Psoas muscle (tissue), 8 donors: ENCODE measurements at regions of chr3 and their contacts with region 1.

Region 1: DNA sequence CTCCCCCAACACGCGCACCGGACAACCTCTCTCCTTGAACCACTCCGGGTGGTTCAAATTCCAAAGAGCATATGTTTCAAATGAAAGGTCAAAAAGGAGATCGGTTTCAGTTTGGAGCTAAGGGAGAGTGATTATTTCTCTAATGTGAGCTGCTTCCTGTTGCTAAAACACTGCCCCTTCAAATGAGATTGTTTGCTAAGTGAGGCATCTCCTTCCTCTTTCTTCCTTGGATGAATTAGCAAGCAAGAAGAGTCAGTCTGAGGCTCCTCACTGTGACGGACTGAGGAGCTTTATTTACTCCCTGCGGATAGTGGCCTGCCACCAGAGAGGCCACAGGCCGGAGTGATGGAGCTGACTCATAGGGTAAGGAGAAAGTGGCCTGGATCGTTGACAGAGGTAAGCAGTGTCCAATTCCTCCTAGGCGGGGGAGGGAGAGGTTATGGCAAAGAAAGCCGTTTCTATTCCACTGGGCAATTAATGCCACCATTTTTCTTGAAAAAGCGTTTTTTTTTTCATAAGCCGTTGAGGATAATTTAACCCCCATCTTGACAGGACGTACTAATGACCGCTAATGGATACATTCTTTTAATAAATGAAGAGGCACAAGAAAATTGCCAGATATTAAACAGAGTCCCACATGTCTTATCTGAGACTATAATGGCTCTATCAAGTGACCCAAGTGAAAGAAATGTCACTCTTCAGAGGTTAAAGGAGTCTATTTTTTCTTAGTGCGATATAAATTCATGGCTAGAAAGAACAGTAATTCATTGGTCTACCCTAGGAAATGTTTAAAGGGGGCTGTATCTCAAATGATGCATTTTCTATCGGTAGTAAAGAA is 167.0 kb upstream of the ANKRD28 start:
- DNase-seq: peak; percentile 68 to 83
- ATAC-seq: peak; percentile 98 to 100 (median 99)
- H3K4me3 ChIP-seq: peak overlapping the region; percentile 69
- H3K27ac ChIP-seq: peak overlapping the region; percentile 96
- H3K4me1 ChIP-seq: peaks cover 22% of the 10 kb centered on the region
- H3K27me3 ChIP-seq: no peaks in the 10 kb centered on the region
- CTCF ChIP-seq: no peak

Region 2: GRCh38 chr3:15903164-15903563 is 61.7 kb before region 1 on chr3:
- intact Hi-C with region 1: loop called (anchors 5 kb)
- DNase-seq: peak; percentile 25 to 73
- ATAC-seq: peak; percentile 81 to 90 (median 86)
- H3K4me3 ChIP-seq: no peak overlapping the region
- H3K27ac ChIP-seq: peak overlapping the region; percentile 86
- H3K4me1 ChIP-seq: peaks cover 34% of the 10 kb centered on the region
- H3K27me3 ChIP-seq: no peaks in the 10 kb centered on the region
- CTCF ChIP-seq: no peak

Region 3: GRCh38 chr3:15924914-15925313 is 39.9 kb before region 1 on chr3:
- intact Hi-C with region 1: loop called in 1 of 2 experiments (anchors 5 kb)
- DNase-seq: no peak
- ATAC-seq: no peak
- H3K4me3 ChIP-seq: no peak overlapping the region
- H3K27ac ChIP-seq: no peak overlapping the region
- H3K4me1 ChIP-seq: no peaks in the 10 kb centered on the region
- H3K27me3 ChIP-seq: no peaks in the 10 kb centered on the region
- CTCF ChIP-seq: no peak